ENCODE measurements at regions of chr15 and their contacts with region 1.

Region 1: GRCh38 chr15:98428253-98428989 is 219.9 kb upstream of the IGF1R start:
- DNase-seq: peak; percentile 88
- CTCF ChIP-seq: peak; percentile 77

Region 2: DNA sequence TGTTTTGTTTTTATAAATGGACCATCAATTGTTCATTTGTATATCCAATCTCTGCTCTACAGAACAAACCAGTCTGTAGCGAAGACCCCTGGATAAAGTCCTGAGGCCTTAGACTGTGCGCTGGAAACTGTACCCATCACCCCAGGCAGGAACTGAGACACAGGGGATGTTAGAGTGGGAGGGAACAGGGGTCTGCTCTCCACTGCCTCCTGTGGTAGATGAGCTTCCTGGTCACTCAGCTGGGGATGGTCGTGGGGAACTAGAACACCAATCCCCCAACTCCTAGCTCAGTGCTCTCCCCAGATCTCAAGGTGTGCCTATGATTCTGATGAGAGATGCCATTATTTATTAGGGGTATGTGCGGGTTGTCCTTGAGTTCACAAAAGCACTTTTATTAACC is 120.3 kb before region 1 on chr15:
- in situ Hi-C with region 1: loop called (anchors 10 kb)
- DNase-seq: no peak
- CTCF ChIP-seq: no peak

Region 3: GRCh38 chr15:98493917-98494511 is 65.6 kb after region 1 on chr15:
- in situ Hi-C with region 1: no loop called
- DNase-seq: no peak
- CTCF ChIP-seq: no peak

Region 4: DNA sequence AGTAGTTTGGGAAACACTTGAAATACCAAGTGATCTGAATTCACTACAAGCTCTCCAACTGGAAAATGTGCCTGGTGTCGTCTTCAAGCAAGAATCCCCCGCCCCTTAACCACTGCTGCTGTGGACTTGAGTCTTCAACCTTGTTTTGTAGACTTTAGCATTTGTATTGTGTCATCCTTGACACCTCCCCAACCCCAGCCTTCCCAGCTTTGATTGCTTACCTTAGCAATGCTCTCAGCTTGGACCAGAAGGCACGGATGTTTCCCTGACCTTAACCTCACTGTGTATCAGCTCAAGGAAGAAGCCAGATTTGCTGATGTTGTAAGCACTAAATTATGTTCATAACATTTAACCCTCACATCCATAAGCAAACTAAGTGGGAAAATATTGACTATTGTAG is 366.3 kb after region 1 on chr15:
- in situ Hi-C with region 1: no loop called
- DNase-seq: no peak
- CTCF ChIP-seq: no peak

Measured in GM13976 (cell line).